ENCODE measurements at regions of chr15 and their contacts with region 1.

Region 1: GRCh38 chr15:74540761-74541493 is at the start of gene ARID3B:
- DNase-seq: peak; percentile 88 to 96
- H3K4me3 ChIP-seq: peak within 1 kb of the TSS; percentile 92 to 100 (median 95)
- H3K27ac ChIP-seq: peak within 1 kb of the TSS; percentile 65
- H3K4me1 ChIP-seq: peaks cover 2 to 9% (median 4%) of the 10 kb centered on the region in 4 experiments; a peak in 5 of 7 replicates
- H3K27me3 ChIP-seq: no peaks in the 10 kb centered on the region
- CTCF ChIP-seq: no peak
- EP300 ChIP-seq: no peak
- POLR2A ChIP-seq: peak; percentile 75 to 93
- RAD21 ChIP-seq: no peak
- total RNA-seq, gene ARID3B: 115 and 118 TPM in 2 replicates

Region 2: GRCh38 chr15:74336108-74337002 is 204.6 kb before region 1 on chr15:
- CTCF ChIA-PET with region 1: no interaction called
- POLR2A ChIA-PET with region 1: no interaction called
- DNase-seq: no peak
- H3K4me3 ChIP-seq: no peak overlapping the region
- H3K27ac ChIP-seq: no peak overlapping the region
- H3K4me1 ChIP-seq: no peaks in the 10 kb centered on the region; a peak in 1 of 7 replicates
- H3K27me3 ChIP-seq: no peaks in the 10 kb centered on the region
- CTCF ChIP-seq: no peak
- EP300 ChIP-seq: no peak
- POLR2A ChIP-seq: no peak
- RAD21 ChIP-seq: no peak

Region 3: GRCh38 chr15:74390652-74391288 is 150.2 kb before region 1 on chr15:
- CTCF ChIA-PET with region 1: no interaction called
- POLR2A ChIA-PET with region 1: no interaction called
- DNase-seq: no peak
- H3K4me3 ChIP-seq: no peak overlapping the region
- H3K27ac ChIP-seq: no peak overlapping the region
- H3K4me1 ChIP-seq: peaks cover 0 to 11% (median 6%) of the 10 kb centered on the region in 4 experiments; a peak in 5 of 7 replicates
- H3K27me3 ChIP-seq: no peaks in the 10 kb centered on the region
- CTCF ChIP-seq: no peak
- EP300 ChIP-seq: no peak
- POLR2A ChIP-seq: no peak
- RAD21 ChIP-seq: no peak

Region 4: DNA sequence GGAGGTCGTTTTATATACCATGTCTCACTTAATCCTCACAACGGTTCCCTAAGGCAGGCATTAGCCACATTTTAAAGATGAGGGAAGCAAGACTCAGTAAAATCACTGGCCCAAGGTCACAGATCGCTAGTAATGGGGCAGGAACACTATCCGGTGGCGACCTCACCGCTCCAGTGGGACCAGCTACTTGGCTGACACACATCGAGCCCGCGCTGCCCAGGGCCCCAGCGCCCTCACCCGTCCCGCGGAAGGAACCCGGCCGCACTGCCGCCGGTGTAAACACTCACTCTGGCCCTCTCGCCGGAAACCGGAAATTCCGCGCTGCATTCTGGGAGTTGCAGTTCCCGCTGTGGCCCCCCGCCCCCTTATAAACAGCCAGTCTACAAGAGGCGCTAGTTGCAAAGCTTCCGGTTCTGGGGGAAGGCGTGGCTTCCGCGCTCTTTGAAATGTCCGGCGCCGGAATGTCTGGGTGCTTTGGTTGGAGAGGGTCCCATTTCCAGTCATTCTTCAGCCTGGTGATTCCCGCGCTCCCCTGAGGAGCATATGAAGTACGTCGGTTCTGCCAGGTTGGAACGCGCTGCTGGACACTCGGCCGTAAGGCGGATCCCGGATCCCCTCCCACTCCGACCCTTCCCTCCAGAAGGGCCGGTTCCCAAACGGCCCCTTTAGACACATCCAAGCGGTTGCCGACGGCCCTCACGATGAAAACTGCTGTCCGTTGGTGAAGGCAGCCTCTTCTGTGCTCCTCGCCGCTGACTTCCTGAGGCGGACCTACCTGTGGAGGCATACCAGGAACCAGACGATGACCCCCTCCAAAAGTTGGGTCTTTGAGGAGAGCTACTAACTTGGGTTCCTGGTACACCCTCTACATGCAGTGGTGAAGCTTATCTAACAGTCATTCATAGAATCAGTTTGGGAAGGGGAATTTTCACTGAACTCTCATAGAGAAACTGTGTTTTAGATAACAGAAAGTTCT is 79.8 kb before region 1 on chr15 and contains the start of gene UBL7:
- CTCF ChIA-PET with region 1: no interaction called
- POLR2A ChIA-PET with region 1: interaction called, 25 read pairs
- DNase-seq: peak; percentile 87 to 98
- H3K4me3 ChIP-seq: peak within 1 kb of the TSS; percentile 79 to 97 (median 85)
- H3K27ac ChIP-seq: peak within 1 kb of the TSS; percentile 58
- H3K4me1 ChIP-seq: no peaks in the 10 kb centered on the region; a peak in 1 of 7 replicates
- H3K27me3 ChIP-seq: no peaks in the 10 kb centered on the region
- CTCF ChIP-seq: peak in 2 of 3 experiments; percentile 19 to 21; a peak in 3 of 4 replicates
- EP300 ChIP-seq: no peak
- POLR2A ChIP-seq: peak; percentile 91 to 98
- RAD21 ChIP-seq: peak; percentile 19 to 33; a peak in 3 of 4 replicates
- total RNA-seq, gene UBL7: 71.5 and 76.7 TPM in 2 replicates

Region 5: DNA sequence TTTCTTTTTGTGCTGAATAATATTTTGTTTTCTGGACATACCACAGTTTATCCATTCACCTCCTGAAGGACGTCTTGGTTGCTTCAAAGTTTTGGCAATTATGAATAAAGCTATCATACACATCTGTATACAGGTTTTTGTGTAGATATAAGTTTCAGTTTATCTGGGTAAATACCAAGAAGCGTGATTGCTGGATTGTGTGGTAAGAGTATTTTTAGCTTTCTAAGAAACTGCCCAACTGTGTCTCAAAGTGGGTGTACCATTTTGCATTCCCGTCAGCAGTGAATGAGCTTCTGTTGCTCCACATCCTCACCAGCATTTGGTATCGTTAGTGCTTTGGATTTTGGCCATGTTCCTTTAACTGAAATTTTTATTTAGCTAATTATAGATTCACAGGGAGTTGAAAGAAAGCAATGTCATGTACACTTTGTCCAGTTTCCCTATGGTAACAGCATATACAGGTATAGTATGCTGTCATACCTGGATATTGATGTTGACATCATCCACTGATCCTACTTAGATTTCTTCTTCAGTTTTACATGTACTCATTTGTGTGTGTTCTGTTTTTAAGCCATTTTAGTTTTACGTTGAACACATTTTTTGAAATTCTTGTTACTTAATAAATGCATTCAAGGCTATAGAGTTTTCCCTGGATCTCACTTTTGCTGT is 12.0 kb after region 1 on chr15:
- CTCF ChIA-PET with region 1: interaction called, 3 read pairs
- POLR2A ChIA-PET with region 1: interaction called, 21 read pairs
- DNase-seq: no peak
- H3K4me3 ChIP-seq: no peak overlapping the region
- H3K27ac ChIP-seq: no peak overlapping the region
- H3K4me1 ChIP-seq: no peaks in the 10 kb centered on the region
- H3K27me3 ChIP-seq: no peaks in the 10 kb centered on the region
- CTCF ChIP-seq: no peak
- EP300 ChIP-seq: no peak
- POLR2A ChIP-seq: no peak
- RAD21 ChIP-seq: no peak

Region 6: DNA sequence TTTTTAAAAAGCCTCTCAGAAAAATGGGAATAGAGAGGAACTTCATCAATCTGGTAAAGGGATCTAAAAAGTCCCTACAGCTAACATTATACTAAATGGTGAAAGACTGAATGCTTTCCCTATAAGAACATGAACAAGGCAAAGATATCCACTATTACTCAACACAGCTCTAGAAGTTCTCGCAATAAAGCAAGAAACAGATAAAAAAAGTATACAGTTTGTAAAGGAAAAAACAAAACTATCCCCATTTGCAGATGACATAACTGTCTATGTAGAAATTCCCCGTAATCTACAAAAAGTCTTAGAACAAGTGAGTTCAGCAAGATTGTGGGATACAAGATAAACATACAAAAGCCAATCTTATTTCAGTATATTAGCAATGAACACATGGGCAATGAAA is 139.5 kb after region 1 on chr15:
- CTCF ChIA-PET with region 1: no interaction called
- POLR2A ChIA-PET with region 1: no interaction called
- DNase-seq: no peak
- H3K4me3 ChIP-seq: no peak overlapping the region
- H3K27ac ChIP-seq: no peak overlapping the region
- H3K4me1 ChIP-seq: no peaks in the 10 kb centered on the region
- H3K27me3 ChIP-seq: no peaks in the 10 kb centered on the region
- CTCF ChIP-seq: no peak
- EP300 ChIP-seq: no peak
- POLR2A ChIP-seq: no peak
- RAD21 ChIP-seq: no peak

Region 7: DNA sequence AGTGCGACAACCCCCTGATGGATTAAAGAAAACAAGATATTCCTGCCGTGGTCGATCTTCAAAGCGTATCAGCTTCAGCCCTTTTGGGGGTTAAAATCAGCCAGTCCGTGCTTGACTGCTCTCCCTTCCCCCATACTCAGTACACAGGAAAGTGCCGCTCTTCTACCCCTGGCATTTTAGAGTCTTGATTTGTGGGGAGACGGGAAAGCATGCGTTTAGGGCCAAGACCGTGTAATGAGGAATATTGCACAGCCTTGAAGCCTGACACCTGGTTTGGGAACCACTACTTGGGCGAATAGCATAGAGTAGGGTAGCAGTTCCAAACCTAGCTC is 155.4 kb after region 1 on chr15:
- CTCF ChIA-PET with region 1: no interaction called
- POLR2A ChIA-PET with region 1: no interaction called
- DNase-seq: no peak
- H3K4me3 ChIP-seq: peak overlapping the region; percentile 82 to 97 (median 92)
- H3K27ac ChIP-seq: peak overlapping the region; percentile 76; the same call in 1 of the 2 replicates
- H3K4me1 ChIP-seq: peaks cover 0 to 5% (median 3%) of the 10 kb centered on the region in 4 experiments; a peak in 4 of 7 replicates
- H3K27me3 ChIP-seq: no peaks in the 10 kb centered on the region; a peak in 3 of 7 replicates
- CTCF ChIP-seq: no peak
- EP300 ChIP-seq: no peak
- POLR2A ChIP-seq: no peak
- RAD21 ChIP-seq: no peak